PC-3 (cell line): ENCODE measurements at regions of chr11 and their contacts with region 1.

Region 1: GRCh38 chr11:66466225-66467027 is at the start of gene PELI3:
- DNase-seq: peak; percentile 96
- ATAC-seq: peak; percentile 92
- H3K4me3 ChIP-seq: peak within 1 kb of the TSS; percentile 92
- H3K27ac ChIP-seq: no peak within 1 kb of the TSS
- H3K4me1 ChIP-seq: peaks cover 20% of the 10 kb centered on the region
- H3K27me3 ChIP-seq: no peaks in the 10 kb centered on the region
- CTCF ChIP-seq: no peak
- total RNA-seq, gene PELI3: 22.9 and 35.2 TPM in 2 replicates

Region 2: GRCh38 chr11:66222358-66223149 is 243.9 kb before region 1 on chr11:
- CTCF ChIA-PET with region 1: no interaction called
- POLR2A ChIA-PET with region 1: interaction called, 12 read pairs
- intact Hi-C with region 1: no loop called
- DNase-seq: peak; percentile 96
- ATAC-seq: peak; percentile 91
- H3K4me3 ChIP-seq: no peak overlapping the region
- H3K27ac ChIP-seq: no peak overlapping the region
- H3K4me1 ChIP-seq: peaks cover 7% of the 10 kb centered on the region
- H3K27me3 ChIP-seq: no peaks in the 10 kb centered on the region
- CTCF ChIP-seq: peak; percentile 99

Region 3: GRCh38 chr11:66408488-66409214 is 57.8 kb before region 1 on chr11:
- CTCF ChIA-PET with region 1: interaction called, 8 read pairs
- POLR2A ChIA-PET with region 1: interaction called, 15 read pairs
- intact Hi-C with region 1: no loop called
- DNase-seq: peak; percentile 90
- ATAC-seq: peak; percentile 84
- H3K4me3 ChIP-seq: peak overlapping the region; percentile 49; the same call in 1 of the 2 replicates
- H3K27ac ChIP-seq: no peak overlapping the region
- H3K4me1 ChIP-seq: no peaks in the 10 kb centered on the region; the same call in 1 of the 2 replicates
- H3K27me3 ChIP-seq: peaks cover 83% of the 10 kb centered on the region
- CTCF ChIP-seq: peak; percentile 100

Region 4: GRCh38 chr11:66480117-66480938 is 13.9 kb after region 1 on chr11 and contains the start of gene DPP3:
- CTCF ChIA-PET with region 1: interaction called, 18 read pairs
- POLR2A ChIA-PET with region 1: interaction called, 15 read pairs
- intact Hi-C with region 1: no loop called
- DNase-seq: peak; percentile 99
- ATAC-seq: peak; percentile 89
- H3K4me3 ChIP-seq: peak within 1 kb of the TSS; percentile 78
- H3K27ac ChIP-seq: peak within 1 kb of the TSS; percentile 53
- H3K4me1 ChIP-seq: peaks cover 14% of the 10 kb centered on the region
- H3K27me3 ChIP-seq: no peaks in the 10 kb centered on the region
- CTCF ChIP-seq: no peak
- total RNA-seq, gene DPP3: 135 and 165 TPM in 2 replicates

Region 5: DNA sequence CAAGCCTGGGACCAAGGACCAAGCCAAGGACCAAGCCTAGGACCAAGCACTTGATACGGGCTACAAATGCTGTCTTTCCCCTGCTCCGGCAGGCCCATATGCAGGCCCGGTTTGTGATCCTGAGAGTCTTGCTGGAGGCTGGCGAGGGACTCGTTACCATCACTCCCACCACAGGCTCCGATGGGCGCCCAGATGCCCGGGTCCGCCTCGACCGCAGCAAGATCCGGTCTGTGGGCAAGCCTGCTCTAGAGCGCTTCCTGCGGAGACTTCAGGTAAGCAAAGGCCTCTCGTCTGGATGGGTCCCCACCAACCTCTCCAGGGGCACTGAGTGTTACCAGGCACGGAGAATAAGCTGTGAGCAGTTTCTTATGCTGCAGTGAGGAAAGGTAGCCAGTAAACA is 30.8 kb after region 1 on chr11:
- CTCF ChIA-PET with region 1: no interaction called
- POLR2A ChIA-PET with region 1: no interaction called
- intact Hi-C with region 1: no loop called
- DNase-seq: no peak
- ATAC-seq: no peak
- H3K4me3 ChIP-seq: no peak overlapping the region
- H3K27ac ChIP-seq: no peak overlapping the region
- H3K4me1 ChIP-seq: no peaks in the 10 kb centered on the region
- H3K27me3 ChIP-seq: no peaks in the 10 kb centered on the region
- CTCF ChIP-seq: no peak

Region 6: GRCh38 chr11:66752148-66752547 is 285.7 kb after region 1 on chr11:
- CTCF ChIA-PET with region 1: no interaction called
- POLR2A ChIA-PET with region 1: no interaction called
- intact Hi-C with region 1: no loop called
- DNase-seq: no peak
- ATAC-seq: no peak
- H3K4me3 ChIP-seq: no peak overlapping the region
- H3K27ac ChIP-seq: no peak overlapping the region
- H3K4me1 ChIP-seq: peaks cover 27% of the 10 kb centered on the region
- H3K27me3 ChIP-seq: no peaks in the 10 kb centered on the region
- CTCF ChIP-seq: no peak

Region 7: DNA sequence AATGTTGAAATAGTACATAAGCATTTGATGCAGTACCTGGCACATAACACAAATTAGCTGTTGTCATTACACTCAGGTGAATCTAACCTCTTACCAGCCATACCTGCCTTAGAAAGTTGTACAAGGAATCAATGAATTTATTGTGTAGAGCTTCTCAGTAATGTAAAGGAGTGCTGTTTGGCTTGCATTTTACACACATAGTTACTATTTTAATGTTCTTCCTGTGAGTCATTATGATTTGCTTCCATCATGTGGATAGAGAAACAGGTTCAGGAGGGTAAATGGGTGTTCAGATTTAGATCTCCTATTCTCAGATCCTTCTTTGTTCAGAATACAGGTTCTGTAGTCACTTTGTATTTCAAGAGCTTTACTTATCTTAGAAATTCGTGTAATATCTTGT is 349.2 kb after region 1 on chr11:
- CTCF ChIA-PET with region 1: no interaction called
- POLR2A ChIA-PET with region 1: interaction called, 19 read pairs
- intact Hi-C with region 1: no loop called
- DNase-seq: peak; percentile 93
- ATAC-seq: peak; percentile 91
- H3K4me3 ChIP-seq: peak overlapping the region; percentile 40; the same call in 1 of the 2 replicates
- H3K27ac ChIP-seq: peak overlapping the region; percentile 87
- H3K4me1 ChIP-seq: peaks cover 35% of the 10 kb centered on the region
- H3K27me3 ChIP-seq: no peaks in the 10 kb centered on the region
- CTCF ChIP-seq: no peak

Region 8: DNA sequence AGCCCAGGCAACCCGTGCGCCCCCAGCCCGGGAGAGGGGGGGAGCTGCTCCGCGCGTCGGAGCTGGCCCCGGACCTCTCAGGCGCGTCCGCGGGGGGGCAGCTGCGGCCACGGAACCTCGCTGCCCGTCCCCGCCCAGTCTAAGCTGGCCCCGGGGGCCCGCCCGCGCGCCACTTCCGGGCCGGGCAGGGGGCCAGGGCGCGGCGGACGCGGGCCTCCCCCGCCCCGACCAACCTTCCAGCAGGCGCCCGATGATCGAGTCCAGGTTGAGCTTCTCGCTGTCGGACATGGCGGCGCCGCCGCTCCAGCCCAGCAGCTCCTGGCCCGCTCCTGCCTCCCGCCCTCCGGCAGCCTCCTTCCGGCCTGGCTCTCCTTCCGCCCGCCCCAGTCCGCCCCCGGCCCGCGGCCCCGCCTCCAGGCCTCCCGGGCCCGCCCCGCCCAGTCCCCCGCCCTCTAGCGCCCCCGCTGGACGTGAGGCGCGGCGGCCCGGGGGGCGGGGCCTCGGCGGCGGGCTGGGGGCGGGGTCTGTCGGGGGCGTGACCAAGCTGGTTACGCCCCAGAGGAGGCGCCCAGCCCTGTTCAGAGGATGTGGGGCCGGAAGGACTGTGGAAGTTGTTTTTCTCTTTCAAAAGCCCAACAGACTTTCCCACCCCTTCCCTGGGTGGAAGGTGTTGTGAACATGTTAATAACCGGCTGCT is 935.2 kb after region 1 on chr11 and contains the start of gene PPP1CA:
- CTCF ChIA-PET with region 1: no interaction called
- POLR2A ChIA-PET with region 1: interaction called, 16 read pairs
- intact Hi-C with region 1: no loop called
- DNase-seq: peak; percentile 88
- ATAC-seq: peak; percentile 86
- H3K4me3 ChIP-seq: peak within 1 kb of the TSS; percentile 88
- H3K27ac ChIP-seq: peak within 1 kb of the TSS; percentile 71
- H3K4me1 ChIP-seq: peaks cover 11% of the 10 kb centered on the region
- H3K27me3 ChIP-seq: no peaks in the 10 kb centered on the region
- CTCF ChIP-seq: 0 out of 2 replicates have a peak, but pooled peaks have one; percentile 30
- total RNA-seq, gene PPP1CA: 449 and 477 TPM in 2 replicates